Colonic mucosa (tissue), 4 donors: ENCODE measurements at regions of chr9 and their contacts with region 1.

Region 1: GRCh38 chr9:136410500-136411287 is at the starts of genes ENTR1 and PMPCA:
- DNase-seq: peak; percentile 96
- H3K4me3 ChIP-seq: peak within 1 kb of the TSS; percentile 90
- H3K27ac ChIP-seq: peak within 1 kb of the TSS; percentile 69
- H3K4me1 ChIP-seq: peaks cover 16% of the 10 kb centered on the region
- H3K27me3 ChIP-seq: no peaks in the 10 kb centered on the region
- CTCF ChIP-seq: no peak
- total RNA-seq, gene ENTR1: 24.5 to 48.4 TPM
- total RNA-seq, gene PMPCA: 56.1 to 60.9 TPM

Region 2: GRCh38 chr9:136133191-136133958 is 277.3 kb before region 1 on chr9:
- intact Hi-C with region 1: no loop called
- DNase-seq: no peak
- H3K4me3 ChIP-seq: peak overlapping the region; percentile 9
- H3K27ac ChIP-seq: no peak overlapping the region
- H3K4me1 ChIP-seq: no peaks in the 10 kb centered on the region
- H3K27me3 ChIP-seq: peaks cover 37% of the 10 kb centered on the region
- CTCF ChIP-seq: no peak

Region 3: GRCh38 chr9:136482793-136483588 is 72.3 kb after region 1 on chr9 and contains the start of gene SEC16A:
- intact Hi-C with region 1: loop called (anchors 5 kb)
- DNase-seq: peak; percentile 100
- H3K4me3 ChIP-seq: peak within 1 kb of the TSS; percentile 96
- H3K27ac ChIP-seq: peak within 1 kb of the TSS; percentile 99
- H3K4me1 ChIP-seq: peaks cover 18% of the 10 kb centered on the region
- H3K27me3 ChIP-seq: no peaks in the 10 kb centered on the region
- CTCF ChIP-seq: no peak
- total RNA-seq, gene SEC16A: 66.2 to 104 TPM